Activated naive CD4-positive, alpha-beta T cell treated with anti-CD3 and anti-CD28 coated beads for 36 hours (primary cell): ENCODE measurements at regions of chr2 and their contacts with region 1.

Region 1: GRCh38 chr2:201071479-201072200 is at the starts of genes HYCC2 and NDUFB3:
- DNase-seq: peak; percentile 96
- H3K4me3 Mint-ChIP-seq: peak within 1 kb of the TSS; percentile 96
- H3K27ac Mint-ChIP-seq: peak within 1 kb of the TSS; percentile 92
- H3K4me1 Mint-ChIP-seq: peaks cover 51% of the 10 kb centered on the region
- H3K27me3 Mint-ChIP-seq: no peaks in the 10 kb centered on the region
- total RNA-seq, gene HYCC2: 19.1 TPM
- total RNA-seq, gene NDUFB3: 159 to 162 TPM

Region 2: GRCh38 chr2:200864176-200864976 is 207.3 kb before region 1 on chr2 and contains the start of gene CLK1:
- CTCF ChIA-PET with region 1: interaction called, 3 read pairs
- intact Hi-C with region 1: loop called (anchors 1 kb)
- DNase-seq: peak; percentile 98
- H3K4me3 Mint-ChIP-seq: peak within 1 kb of the TSS; percentile 98
- H3K27ac Mint-ChIP-seq: peak within 1 kb of the TSS; percentile 100
- H3K4me1 Mint-ChIP-seq: peaks cover 32% of the 10 kb centered on the region
- H3K27me3 Mint-ChIP-seq: no peaks in the 10 kb centered on the region
- total RNA-seq, gene CLK1: 174 to 196 TPM

Region 3: GRCh38 chr2:200963124-200963917 is 108.3 kb before region 1 on chr2 and contains the start of gene ORC2:
- CTCF ChIA-PET with region 1: interaction called, 53 read pairs
- intact Hi-C with region 1: loop called (anchors 1 kb)
- DNase-seq: peak; percentile 94
- H3K4me3 Mint-ChIP-seq: peak within 1 kb of the TSS; percentile 88
- H3K27ac Mint-ChIP-seq: peak within 1 kb of the TSS; percentile 94
- H3K4me1 Mint-ChIP-seq: peaks cover 56% of the 10 kb centered on the region
- H3K27me3 Mint-ChIP-seq: no peaks in the 10 kb centered on the region
- total RNA-seq, gene ORC2: 53.7 to 56.8 TPM

Region 4: GRCh38 chr2:201118121-201118960 is 46.7 kb after region 1 on chr2:
- CTCF ChIA-PET with region 1: interaction called, 6 read pairs
- intact Hi-C with region 1: loop called (anchors 1 kb)
- DNase-seq: peak; percentile 94
- H3K4me3 Mint-ChIP-seq: peak overlapping the region; percentile 96
- H3K27ac Mint-ChIP-seq: peak overlapping the region; percentile 100
- H3K4me1 Mint-ChIP-seq: peaks cover 41% of the 10 kb centered on the region
- H3K27me3 Mint-ChIP-seq: no peaks in the 10 kb centered on the region

Region 5: GRCh38 chr2:201182650-201183364 is 111.2 kb after region 1 on chr2 and contains the start of gene CASP10:
- CTCF ChIA-PET with region 1: interaction called, 15 read pairs
- intact Hi-C with region 1: no loop called
- DNase-seq: peak; percentile 32
- H3K4me3 Mint-ChIP-seq: peak within 1 kb of the TSS; percentile 97
- H3K27ac Mint-ChIP-seq: peak within 1 kb of the TSS; percentile 96
- H3K4me1 Mint-ChIP-seq: peaks cover 39% of the 10 kb centered on the region
- H3K27me3 Mint-ChIP-seq: no peaks in the 10 kb centered on the region
- total RNA-seq, gene CASP10: 22.0 to 22.1 TPM